ENCODE measurements at regions of chr2 and their contacts with region 1.

Region 1: DNA sequence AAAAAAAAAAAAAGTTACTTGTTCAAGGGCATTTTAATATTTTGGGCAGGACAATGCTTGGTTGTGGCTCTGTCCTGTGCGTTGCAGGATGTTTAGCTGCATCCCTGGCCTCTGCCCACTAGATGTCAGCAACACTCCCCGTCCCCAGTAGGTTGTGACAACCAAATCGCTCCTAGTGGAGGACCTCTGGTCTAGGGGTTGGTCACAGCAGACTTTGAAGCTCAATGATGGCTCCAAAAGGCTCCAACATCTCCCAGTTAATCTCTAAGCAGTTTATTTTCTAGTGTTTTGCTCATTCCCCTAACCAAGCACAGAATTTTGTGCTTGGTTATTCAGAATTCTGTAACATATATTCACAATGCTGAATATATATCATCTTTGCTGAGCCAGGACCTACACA is 67.0 kb downstream of the CHRNA1 start:
- ATAC-seq: peak; percentile 60 to 98 (median 85)
- H3K4me3 ChIP-seq: no peak overlapping the region
- H3K27ac ChIP-seq: no peak overlapping the region
- H3K4me1 ChIP-seq: no peaks in the 10 kb centered on the region

Region 2: GRCh38 chr2:174235680-174236079 is 461.6 kb before region 1 on chr2:
- in situ Hi-C with region 1: no loop called
- ATAC-seq: peak in 6 of 8 experiments; percentile 25 to 66 (median 37)
- H3K4me3 ChIP-seq: no peak overlapping the region
- H3K27ac ChIP-seq: peak overlapping the region in 1 of 2 donors; percentile 36
- H3K4me1 ChIP-seq: peaks cover 5 to 8% of the 10 kb centered on the region in 2 donors

Region 3: GRCh38 chr2:174465327-174465726 is 231.9 kb before region 1 on chr2:
- in situ Hi-C with region 1: loop called in 3 of 9 experiments (anchors 25 kb)
- ATAC-seq: peak in 3 of 8 experiments; percentile 19 to 64 (median 21)
- H3K4me3 ChIP-seq: no peak overlapping the region
- H3K27ac ChIP-seq: no peak overlapping the region
- H3K4me1 ChIP-seq: peaks cover 0 to 2% of the 10 kb centered on the region in 2 donors

Region 4: DNA sequence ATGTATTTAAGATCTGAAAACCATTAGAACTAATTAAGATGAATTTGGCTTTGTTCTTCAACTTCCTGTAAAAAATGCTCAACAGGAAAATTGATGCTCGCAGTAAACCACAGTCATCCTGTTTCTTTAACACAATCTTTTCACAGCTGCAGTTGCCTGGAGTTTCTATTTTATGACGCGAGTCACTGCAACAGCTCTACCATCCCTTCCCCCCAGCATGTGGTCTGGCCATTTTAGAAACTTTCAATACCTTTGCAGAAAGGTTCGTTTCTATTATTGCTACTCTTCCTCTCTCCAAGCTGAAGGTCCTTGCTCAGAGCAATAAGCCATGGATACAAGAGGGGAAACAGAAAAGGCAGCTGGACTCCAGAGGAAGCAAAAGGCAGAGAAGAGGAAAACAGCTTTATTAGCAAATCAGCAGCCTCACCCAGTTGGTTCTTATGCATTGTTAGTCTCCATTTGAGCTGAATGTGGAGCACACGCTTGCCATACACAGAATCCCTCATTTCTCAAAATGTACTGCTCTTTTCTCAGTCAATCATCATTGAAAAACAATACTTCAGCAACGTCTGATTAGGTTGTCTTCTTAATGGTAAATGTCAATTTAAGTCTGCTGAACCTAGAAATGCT is 103.6 kb before region 1 on chr2:
- in situ Hi-C with region 1: loop called in 2 of 9 experiments (anchors 25 kb)
- ATAC-seq: peak; percentile 42 to 90 (median 58)
- H3K4me3 ChIP-seq: no peak overlapping the region
- H3K27ac ChIP-seq: peak overlapping the region in 1 of 2 donors; percentile 39
- H3K4me1 ChIP-seq: peaks cover 10 to 16% of the 10 kb centered on the region in 2 donors

Measured in motor neuron (in vitro differentiated cells).